Activated CD8-positive, alpha-beta T cell treated with anti-CD3 and anti-CD28 coated beads for 36 hours (primary cell): ENCODE measurements at regions of chr17 and their contacts with region 1.

Region 1: GRCh38 chr17:74736513-74737298 is at the start of gene RAB37:
- DNase-seq: peak; percentile 62
- ATAC-seq: peak; percentile 17
- H3K4me3 Mint-ChIP-seq: peak within 1 kb of the TSS; percentile 78
- H3K27ac Mint-ChIP-seq: peak within 1 kb of the TSS; percentile 90
- H3K4me1 Mint-ChIP-seq: peaks cover 46% of the 10 kb centered on the region
- H3K27me3 Mint-ChIP-seq: no peaks in the 10 kb centered on the region
- CTCF ChIP-seq: peak; percentile 53
- total RNA-seq, gene RAB37: 6.6 to 6.7 TPM

Region 2: DNA sequence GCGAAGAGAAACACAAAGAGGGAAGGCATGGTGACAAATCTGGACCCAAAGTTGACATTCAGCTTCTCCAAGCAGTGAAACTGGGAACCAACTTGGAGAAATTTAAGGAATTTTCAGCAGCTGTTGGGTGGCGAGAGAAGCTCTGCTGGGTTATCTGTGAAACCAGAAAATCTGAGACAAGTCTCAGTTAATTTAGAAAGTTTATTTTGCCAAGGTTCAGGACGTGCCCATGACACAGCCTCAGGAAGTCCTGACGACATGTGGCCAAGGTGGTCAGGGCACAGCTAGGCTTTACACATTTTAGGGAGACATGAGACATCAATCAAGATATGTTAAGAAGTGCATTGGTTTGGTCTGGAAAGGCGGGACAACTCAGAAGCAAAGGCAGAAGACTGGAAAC is 12.8 kb before region 1 on chr17:
- CTCF ChIA-PET with region 1: interaction called, 22 read pairs
- POLR2A ChIA-PET with region 1: no interaction called
- intact Hi-C with region 1: no loop called
- DNase-seq: no peak
- ATAC-seq: no peak
- H3K4me3 Mint-ChIP-seq: no peak overlapping the region
- H3K27ac Mint-ChIP-seq: no peak overlapping the region
- H3K4me1 Mint-ChIP-seq: no peaks in the 10 kb centered on the region
- H3K27me3 Mint-ChIP-seq: no peaks in the 10 kb centered on the region
- CTCF ChIP-seq: no peak

Region 3: DNA sequence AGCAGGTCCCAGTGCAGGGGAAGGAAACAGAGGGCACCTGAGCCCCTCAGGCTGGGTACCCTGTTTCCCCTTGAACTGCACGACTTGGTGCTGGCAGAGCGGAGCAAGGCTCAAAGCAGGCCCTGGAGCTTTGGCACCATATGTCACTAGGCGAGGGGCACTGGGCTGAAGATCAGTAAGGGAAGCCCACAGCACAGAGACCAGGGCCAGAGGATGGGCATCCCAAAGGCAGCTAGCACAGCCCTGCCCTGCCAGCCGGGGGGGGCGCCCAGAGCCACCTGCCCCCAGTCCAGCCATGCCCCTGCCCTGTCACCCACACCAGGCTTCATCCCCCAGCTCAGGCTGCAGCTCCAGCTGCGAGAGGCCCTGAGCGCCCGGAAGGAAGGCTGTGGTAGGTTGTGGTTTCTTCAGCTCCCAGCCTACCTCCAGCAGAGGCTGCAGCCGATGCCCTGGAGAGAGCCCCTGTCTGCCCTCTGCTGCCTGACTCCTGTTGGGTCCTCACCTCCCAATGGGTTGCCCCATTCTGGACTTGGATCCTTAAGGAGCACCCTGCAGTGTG is 22.6 kb after region 1 on chr17:
- CTCF ChIA-PET with region 1: interaction called, 31 read pairs
- POLR2A ChIA-PET with region 1: interaction called, 3 read pairs
- intact Hi-C with region 1: no loop called
- DNase-seq: peak; percentile 75
- ATAC-seq: peak; percentile 82
- H3K4me3 Mint-ChIP-seq: peak overlapping the region; percentile 51
- H3K27ac Mint-ChIP-seq: peak overlapping the region; percentile 81
- H3K4me1 Mint-ChIP-seq: peaks cover 68% of the 10 kb centered on the region
- H3K27me3 Mint-ChIP-seq: no peaks in the 10 kb centered on the region
- CTCF ChIP-seq: no peak

Region 4: GRCh38 chr17:74776044-74776977 is 39.6 kb after region 1 on chr17 and contains the start of gene NAT9:
- CTCF ChIA-PET with region 1: interaction called, 15 read pairs
- POLR2A ChIA-PET with region 1: interaction called, 11 read pairs
- intact Hi-C with region 1: no loop called
- DNase-seq: peak; percentile 98
- ATAC-seq: peak; percentile 75
- H3K4me3 Mint-ChIP-seq: peak within 1 kb of the TSS; percentile 100
- H3K27ac Mint-ChIP-seq: peak within 1 kb of the TSS; percentile 96
- H3K4me1 Mint-ChIP-seq: peaks cover 57% of the 10 kb centered on the region
- H3K27me3 Mint-ChIP-seq: no peaks in the 10 kb centered on the region
- CTCF ChIP-seq: no peak
- total RNA-seq, gene NAT9: 35.5 to 42.4 TPM

Region 5: GRCh38 chr17:74873038-74873873 is 136.6 kb after region 1 on chr17:
- CTCF ChIA-PET with region 1: interaction called, 10 read pairs
- POLR2A ChIA-PET with region 1: interaction called, 6 read pairs
- intact Hi-C with region 1: no loop called
- DNase-seq: peak; percentile 100
- ATAC-seq: peak; percentile 95
- H3K4me3 Mint-ChIP-seq: peak overlapping the region; percentile 75
- H3K27ac Mint-ChIP-seq: peak overlapping the region; percentile 94
- H3K4me1 Mint-ChIP-seq: peaks cover 15% of the 10 kb centered on the region
- H3K27me3 Mint-ChIP-seq: no peaks in the 10 kb centered on the region
- CTCF ChIP-seq: no peak